ENCODE measurements at regions of chr17 and their contacts with region 1.

Region 1: DNA sequence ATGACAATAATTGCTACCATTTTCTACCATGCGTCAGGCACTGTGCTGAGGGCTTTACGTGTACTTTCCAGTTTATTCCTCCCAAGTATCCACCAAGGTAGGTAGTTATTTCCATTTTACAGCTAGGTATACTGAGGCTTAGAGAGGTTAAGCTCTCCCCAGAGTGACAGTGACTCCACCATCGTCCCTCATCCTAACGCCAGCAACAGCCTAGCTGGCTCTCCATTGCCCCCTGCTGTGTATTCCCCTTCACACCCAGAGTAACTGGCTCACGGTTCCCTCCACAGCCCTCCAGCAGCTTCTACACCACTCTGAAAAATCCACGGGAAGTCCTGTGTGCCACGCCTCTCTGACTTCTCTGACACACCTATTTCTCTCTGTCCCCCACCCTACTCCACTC is 7.1 kb upstream of the ASGR1 start:
- DNase-seq: no peak
- H3K4me3 ChIP-seq: no peak overlapping the region
- H3K27ac ChIP-seq: no peak overlapping the region
- H3K4me1 ChIP-seq: 0 out of 2 replicates have a peak, but pooled peaks cover 3% of the 10 kb centered on the region
- H3K27me3 ChIP-seq: no peaks in the 10 kb centered on the region
- CTCF ChIP-seq: no peak

Region 2: DNA sequence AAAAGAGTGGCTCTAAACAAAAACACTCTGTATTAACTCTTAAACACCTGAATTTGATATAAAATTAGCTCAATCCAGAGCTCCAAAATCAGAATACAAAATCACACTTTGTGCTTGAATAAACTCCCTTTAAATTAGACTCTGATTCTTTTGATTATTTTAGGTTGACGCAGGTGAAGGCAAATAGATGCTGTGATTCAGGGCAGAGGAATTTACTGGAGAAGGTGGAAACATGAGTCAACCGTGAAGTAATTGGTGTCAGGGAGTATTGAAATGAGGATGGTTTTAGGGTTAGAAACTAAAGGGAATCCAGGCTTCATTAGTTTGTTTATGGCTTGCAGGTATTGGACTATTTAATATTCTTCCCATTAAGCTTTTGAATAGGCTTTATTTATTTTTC is 317.7 kb before region 1 on chr17:
- CTCF ChIA-PET with region 1: no interaction called
- POLR2A ChIA-PET with region 1: interaction called, 17 read pairs
- intact Hi-C with region 1: no loop called
- DNase-seq: peak; percentile 29 to 92
- H3K4me3 ChIP-seq: peak overlapping the region; percentile 25; the same call in 1 of the 2 replicates
- H3K27ac ChIP-seq: peak overlapping the region; percentile 86
- H3K4me1 ChIP-seq: peaks cover 43% of the 10 kb centered on the region
- H3K27me3 ChIP-seq: no peaks in the 10 kb centered on the region
- CTCF ChIP-seq: no peak

Region 3: GRCh38 chr17:7156342-7156940 is 29.8 kb before region 1 on chr17:
- CTCF ChIA-PET with region 1: no interaction called
- POLR2A ChIA-PET with region 1: no interaction called
- intact Hi-C with region 1: no loop called
- DNase-seq: no peak
- H3K4me3 ChIP-seq: no peak overlapping the region
- H3K27ac ChIP-seq: no peak overlapping the region
- H3K4me1 ChIP-seq: no peaks in the 10 kb centered on the region
- H3K27me3 ChIP-seq: peaks cover 16% of the 10 kb centered on the region; the same call in 1 of the 2 replicates
- CTCF ChIP-seq: no peak

Measured in PC-9 (cell line).